ENCODE measurements at regions of chr19 and their contacts with region 1.

Region 1: DNA sequence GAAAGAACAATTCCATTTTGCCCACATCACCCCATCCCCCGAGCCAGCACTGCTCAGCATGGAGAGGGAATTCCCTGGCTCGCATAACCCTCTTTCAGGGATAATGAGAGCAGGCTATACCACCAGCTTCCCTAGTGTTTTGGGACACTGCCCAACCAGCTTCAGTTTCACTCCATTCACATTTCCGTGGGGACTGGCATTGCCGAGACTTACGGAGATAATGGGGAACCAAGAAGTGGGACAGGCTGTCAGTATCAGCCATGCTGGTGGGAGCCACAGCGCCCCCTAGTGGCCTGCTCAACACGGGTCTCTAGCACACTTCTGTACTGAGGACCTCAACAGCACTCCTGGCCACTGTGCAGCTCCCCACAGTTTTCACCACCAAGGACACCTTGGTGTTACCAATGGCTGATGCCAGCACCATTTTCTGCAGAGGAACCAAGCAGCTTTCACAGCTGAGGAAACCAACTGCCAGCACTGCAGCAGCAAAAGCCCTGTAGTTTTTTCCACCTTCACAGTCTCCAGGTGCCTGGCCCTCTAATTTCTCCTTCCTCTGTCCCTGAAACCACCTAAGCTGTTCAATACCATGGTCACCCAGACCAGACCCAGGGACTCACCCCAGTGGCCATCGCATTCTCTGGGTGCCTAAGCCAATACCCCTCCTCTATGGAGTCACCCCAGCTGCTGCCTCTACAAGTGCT is 23.7 kb downstream of the SLC6A16 start:
- H3K4me3 ChIP-seq: peak overlapping the region; percentile 41
- H3K27ac ChIP-seq: no peak overlapping the region
- H3K4me1 ChIP-seq: no peaks in the 10 kb centered on the region
- CTCF ChIP-seq: peak; percentile 90

Region 2: GRCh38 chr19:49073514-49074378 is 227.6 kb before region 1 on chr19:
- CTCF ChIA-PET with region 1: no interaction called
- POLR2A ChIA-PET with region 1: no interaction called
- H3K4me3 ChIP-seq: no peak overlapping the region
- H3K27ac ChIP-seq: no peak overlapping the region
- H3K4me1 ChIP-seq: no peaks in the 10 kb centered on the region
- CTCF ChIP-seq: peak; percentile 66

Region 3: GRCh38 chr19:49243129-49243528 is 58.2 kb before region 1 on chr19:
- CTCF ChIA-PET with region 1: interaction called, 11 read pairs
- POLR2A ChIA-PET with region 1: no interaction called
- H3K4me3 ChIP-seq: no peak overlapping the region
- H3K27ac ChIP-seq: no peak overlapping the region
- H3K4me1 ChIP-seq: no peaks in the 10 kb centered on the region; the same call in 1 of the 2 replicates
- CTCF ChIP-seq: no peak

Region 4: DNA sequence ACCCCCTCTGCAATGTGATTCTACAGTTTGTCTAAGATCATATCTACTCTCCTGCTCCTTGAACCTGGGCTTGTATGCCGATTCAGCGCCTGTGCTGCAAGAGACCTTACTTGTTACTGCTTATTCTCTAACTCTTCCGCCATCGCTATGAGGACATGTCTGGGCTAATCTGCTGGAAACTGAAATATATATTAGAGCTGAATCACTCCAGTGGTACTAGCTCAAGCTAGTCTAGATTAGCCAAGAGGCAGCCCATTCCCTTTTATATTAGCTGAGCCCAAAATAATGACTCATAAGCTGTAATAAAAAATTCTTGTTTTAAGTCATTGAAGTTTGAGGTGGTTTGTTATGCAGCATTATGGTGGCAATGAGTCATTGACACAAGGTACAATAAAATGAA is 29.1 kb before region 1 on chr19:
- CTCF ChIA-PET with region 1: interaction called, 17 read pairs
- POLR2A ChIA-PET with region 1: no interaction called
- H3K4me3 ChIP-seq: no peak overlapping the region
- H3K27ac ChIP-seq: no peak overlapping the region
- H3K4me1 ChIP-seq: peaks cover 4% of the 10 kb centered on the region; the same call in 1 of the 2 replicates
- CTCF ChIP-seq: no peak

Region 5: DNA sequence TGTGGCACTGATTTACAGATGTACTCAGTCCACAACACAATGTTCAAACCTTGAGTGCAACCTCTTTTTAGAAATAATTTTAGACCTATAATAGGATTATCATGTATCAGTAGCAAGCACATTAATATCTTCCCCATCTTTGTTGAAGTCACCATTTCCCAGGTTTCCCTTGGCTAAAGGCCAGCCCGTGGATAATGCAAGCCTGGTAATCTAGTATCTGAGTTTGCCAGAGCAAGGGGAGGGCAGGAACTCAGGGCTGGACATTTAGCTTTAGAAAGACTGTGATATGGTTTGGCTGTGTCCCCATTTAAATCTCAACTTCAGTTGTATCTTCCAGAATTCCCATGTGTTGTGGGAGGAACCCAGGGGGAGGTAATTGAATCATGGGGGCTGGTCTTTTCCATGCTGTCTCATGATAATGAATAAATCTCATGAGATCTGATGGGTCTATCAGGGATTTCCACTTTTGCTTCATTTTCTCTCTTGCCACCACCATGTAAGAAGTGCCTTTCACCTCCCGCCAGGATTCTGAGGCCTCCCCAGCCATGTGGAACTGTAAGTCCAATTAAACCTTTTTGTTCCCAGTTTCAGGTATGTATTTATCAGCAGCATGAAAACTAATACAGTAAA is 14.1 kb before region 1 on chr19:
- CTCF ChIA-PET with region 1: interaction called, 42 read pairs
- POLR2A ChIA-PET with region 1: no interaction called
- H3K4me3 ChIP-seq: no peak overlapping the region
- H3K27ac ChIP-seq: no peak overlapping the region
- H3K4me1 ChIP-seq: no peaks in the 10 kb centered on the region
- CTCF ChIP-seq: no peak

Region 6: DNA sequence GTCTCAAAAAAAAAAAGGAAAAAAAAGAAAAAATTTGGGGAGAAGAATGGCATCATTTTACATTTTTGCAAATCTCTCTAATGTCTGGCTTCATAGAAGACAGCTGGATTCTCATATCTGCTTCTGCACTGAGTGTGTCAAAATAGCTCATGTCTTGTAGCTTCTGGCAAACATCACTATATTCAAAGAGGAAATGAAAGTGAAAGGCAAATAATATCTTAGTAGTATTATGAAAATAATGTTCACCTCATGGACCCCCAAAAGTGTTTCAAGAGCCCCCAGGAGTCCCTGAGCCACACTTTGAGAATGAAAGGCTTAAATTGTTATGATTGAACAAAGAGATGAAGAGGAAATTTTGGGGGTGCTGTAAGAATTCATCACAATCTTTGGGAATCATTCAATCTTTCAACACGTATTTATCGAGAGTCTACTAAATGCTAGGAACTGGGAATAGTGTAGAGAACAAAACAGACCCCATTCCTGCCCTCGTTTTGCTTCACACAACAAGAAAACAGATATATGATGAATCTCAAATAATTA is 24.9 kb after region 1 on chr19:
- CTCF ChIA-PET with region 1: interaction called, 36 read pairs
- POLR2A ChIA-PET with region 1: no interaction called
- H3K4me3 ChIP-seq: no peak overlapping the region
- H3K27ac ChIP-seq: no peak overlapping the region
- H3K4me1 ChIP-seq: no peaks in the 10 kb centered on the region
- CTCF ChIP-seq: no peak

Region 7: GRCh38 chr19:49347846-49348245 is 46.5 kb after region 1 on chr19:
- CTCF ChIA-PET with region 1: interaction called, 11 read pairs
- POLR2A ChIA-PET with region 1: no interaction called
- H3K4me3 ChIP-seq: no peak overlapping the region
- H3K27ac ChIP-seq: no peak overlapping the region
- H3K4me1 ChIP-seq: no peaks in the 10 kb centered on the region
- CTCF ChIP-seq: 0 out of 2 replicates have a peak, but pooled peaks have one; percentile 8

Measured in HEK293 (cell line).